ENCODE measurements at regions of chr2 and their contacts with region 1.

Region 1: GRCh38 chr2:161063157-161063954 is 96.9 kb upstream of the TANK start:
- DNase-seq: peak; percentile 79
- ATAC-seq: peak; percentile 90
- H3K4me3 Mint-ChIP-seq: no peak overlapping the region
- H3K27ac Mint-ChIP-seq: no peak overlapping the region
- H3K4me1 Mint-ChIP-seq: peaks cover 11% of the 10 kb centered on the region
- H3K27me3 Mint-ChIP-seq: peaks cover 4% of the 10 kb centered on the region

Region 2: DNA sequence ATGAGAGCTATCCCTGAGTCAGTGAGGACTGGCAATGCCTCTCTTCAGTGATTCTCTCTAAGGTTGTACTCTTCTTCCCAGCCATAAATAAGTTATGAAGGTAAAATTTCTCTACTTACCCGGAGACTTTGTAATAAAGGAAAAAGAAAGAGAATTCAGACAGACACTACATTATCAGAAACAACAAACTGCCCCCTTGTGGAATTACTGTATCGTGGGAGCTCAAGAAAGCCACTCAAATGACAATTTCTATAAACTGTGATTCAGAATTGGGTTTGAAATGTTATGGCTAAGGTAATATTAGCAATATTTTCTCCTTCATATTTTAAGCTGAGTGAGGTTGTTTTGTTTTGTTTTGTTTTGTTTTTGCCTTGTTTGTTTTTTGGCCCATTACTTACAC is 59.0 kb before region 1 on chr2:
- CTCF ChIA-PET with region 1: interaction called, 15 read pairs
- POLR2A ChIA-PET with region 1: no interaction called
- DNase-seq: no peak
- ATAC-seq: no peak
- H3K4me3 Mint-ChIP-seq: no peak overlapping the region
- H3K27ac Mint-ChIP-seq: no peak overlapping the region
- H3K4me1 Mint-ChIP-seq: no peaks in the 10 kb centered on the region
- H3K27me3 Mint-ChIP-seq: peaks cover 25% of the 10 kb centered on the region

Region 3: DNA sequence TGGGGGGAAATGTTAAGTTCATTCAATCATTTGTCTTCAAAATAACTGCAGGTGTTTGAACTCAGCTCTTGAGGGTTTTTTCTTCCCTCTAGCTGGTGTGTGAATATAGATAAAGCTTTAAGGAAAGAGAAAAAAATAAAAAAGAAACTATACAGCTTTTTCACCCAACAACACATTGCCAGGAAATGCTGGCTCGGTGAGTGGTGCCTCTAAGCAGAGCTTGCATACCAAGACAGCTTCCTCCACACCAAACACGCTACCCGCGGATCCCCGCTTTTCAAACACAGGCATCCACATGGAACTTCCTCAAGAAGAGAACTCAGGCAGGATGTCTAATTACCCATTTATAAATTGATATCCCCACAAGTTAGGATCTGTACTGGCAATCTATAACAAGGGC is 27.1 kb after region 1 on chr2:
- CTCF ChIA-PET with region 1: interaction called, 59 read pairs
- POLR2A ChIA-PET with region 1: no interaction called
- DNase-seq: peak; percentile 73
- ATAC-seq: peak; percentile 90
- H3K4me3 Mint-ChIP-seq: peak overlapping the region; percentile 64
- H3K27ac Mint-ChIP-seq: peak overlapping the region; percentile 83
- H3K4me1 Mint-ChIP-seq: peaks cover 55% of the 10 kb centered on the region
- H3K27me3 Mint-ChIP-seq: no peaks in the 10 kb centered on the region

Region 4: DNA sequence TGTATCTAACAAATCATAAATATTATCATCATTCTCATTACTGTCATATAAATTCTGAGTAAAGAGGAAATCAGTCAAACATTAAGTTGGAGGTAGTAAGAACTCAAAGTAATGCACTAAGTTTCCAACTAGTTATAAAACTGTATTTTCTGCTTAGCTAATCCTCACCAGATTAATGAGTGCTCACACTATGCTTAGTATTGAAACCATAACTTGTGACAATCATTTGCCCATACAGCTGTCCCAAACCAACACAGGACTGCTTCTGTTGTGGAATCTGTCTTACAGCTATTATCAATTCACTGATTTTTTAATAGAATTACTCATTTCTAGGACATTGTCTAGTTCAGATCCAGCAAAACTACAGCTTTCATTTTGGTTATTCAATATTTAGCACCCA is 55.4 kb after region 1 on chr2:
- CTCF ChIA-PET with region 1: interaction called, 38 read pairs
- POLR2A ChIA-PET with region 1: no interaction called
- DNase-seq: no peak
- ATAC-seq: no peak
- H3K4me3 Mint-ChIP-seq: no peak overlapping the region
- H3K27ac Mint-ChIP-seq: no peak overlapping the region
- H3K4me1 Mint-ChIP-seq: peaks cover 12% of the 10 kb centered on the region
- H3K27me3 Mint-ChIP-seq: peaks cover 5% of the 10 kb centered on the region

Region 5: GRCh38 chr2:161223139-161223732 is 159.9 kb after region 1 on chr2:
- CTCF ChIA-PET with region 1: interaction called, 16 read pairs
- POLR2A ChIA-PET with region 1: no interaction called
- DNase-seq: peak; percentile 39
- ATAC-seq: no peak
- H3K4me3 Mint-ChIP-seq: no peak overlapping the region
- H3K27ac Mint-ChIP-seq: no peak overlapping the region
- H3K4me1 Mint-ChIP-seq: peaks cover 2% of the 10 kb centered on the region
- H3K27me3 Mint-ChIP-seq: no peaks in the 10 kb centered on the region